Prostate gland (tissue), 2 donors: ENCODE measurements at regions of chr17 and their contacts with region 1.

Region 1: GRCh38 chr17:76868176-76868668 is at the start of gene MGAT5B:
- DNase-seq: peak; percentile 67
- H3K4me3 ChIP-seq: peak within 1 kb of the TSS; percentile 18 to 28
- H3K27ac ChIP-seq: no peak within 1 kb of the TSS
- H3K4me1 ChIP-seq: no peaks in the 10 kb centered on the region
- H3K27me3 ChIP-seq: peaks cover 20% of the 10 kb centered on the region
- CTCF ChIP-seq: peak; percentile 72 to 96 (median 81)
- POLR2A ChIP-seq: no peak
- total RNA-seq, gene MGAT5B: 0.14 to 4.1 TPM

Region 2: DNA sequence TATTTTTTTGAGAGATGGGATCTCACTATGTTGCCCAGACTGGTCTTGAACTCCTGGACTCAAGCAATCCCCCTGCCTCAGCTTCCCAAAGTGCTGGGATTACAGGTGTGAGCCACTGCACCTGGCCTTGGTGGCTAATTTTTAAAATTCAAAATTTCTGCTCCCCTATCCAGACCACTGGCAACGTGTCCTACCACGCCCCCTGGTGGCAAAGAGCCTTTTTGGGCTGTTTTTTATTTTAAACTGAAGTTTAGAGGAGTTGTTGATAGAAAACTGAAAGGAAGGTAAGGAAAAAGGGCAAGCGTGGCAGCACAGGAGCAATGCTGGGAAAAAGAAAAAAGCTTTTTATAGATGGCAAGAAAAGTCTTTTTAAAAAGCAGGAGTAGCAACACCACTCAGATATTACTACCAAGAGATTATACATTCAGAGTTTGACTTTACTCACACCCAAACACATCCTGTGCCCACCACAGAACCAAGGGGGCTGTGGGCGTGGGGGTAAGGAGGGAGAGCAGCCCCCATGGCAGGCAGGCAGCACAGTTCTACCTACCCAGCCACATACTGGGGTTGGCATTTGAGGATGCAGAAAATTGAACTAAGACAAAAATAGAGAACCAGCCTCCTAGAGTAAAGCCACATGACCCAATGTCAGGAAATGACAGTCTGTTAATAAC is 153.3 kb before region 1 on chr17:
- intact Hi-C with region 1: no loop called
- DNase-seq: peak; percentile 44
- H3K4me3 ChIP-seq: no peak overlapping the region
- H3K27ac ChIP-seq: no peak overlapping the region
- H3K4me1 ChIP-seq: peaks cover 5% of the 10 kb centered on the region
- H3K27me3 ChIP-seq: no peaks in the 10 kb centered on the region
- CTCF ChIP-seq: peak; percentile 73 to 84 (median 76)
- POLR2A ChIP-seq: no peak

Region 3: GRCh38 chr17:76793775-76794174 is 74.4 kb before region 1 on chr17:
- intact Hi-C with region 1: no loop called
- DNase-seq: no peak
- H3K4me3 ChIP-seq: no peak overlapping the region
- H3K27ac ChIP-seq: no peak overlapping the region
- H3K4me1 ChIP-seq: no peaks in the 10 kb centered on the region
- H3K27me3 ChIP-seq: no peaks in the 10 kb centered on the region
- CTCF ChIP-seq: peak in 1 of 4 experiments; percentile 8
- POLR2A ChIP-seq: no peak

Region 4: GRCh38 chr17:77054936-77055335 is 186.7 kb after region 1 on chr17:
- intact Hi-C with region 1: loop called (anchors 5 kb)
- DNase-seq: no peak
- H3K4me3 ChIP-seq: no peak overlapping the region
- H3K27ac ChIP-seq: no peak overlapping the region
- H3K4me1 ChIP-seq: no peaks in the 10 kb centered on the region
- H3K27me3 ChIP-seq: no peaks in the 10 kb centered on the region
- CTCF ChIP-seq: no peak
- POLR2A ChIP-seq: no peak

Region 5: GRCh38 chr17:77214743-77215142 is 346.5 kb after region 1 on chr17:
- intact Hi-C with region 1: no loop called
- DNase-seq: no peak
- H3K4me3 ChIP-seq: no peak overlapping the region
- H3K27ac ChIP-seq: no peak overlapping the region
- H3K4me1 ChIP-seq: peaks cover 3% of the 10 kb centered on the region
- H3K27me3 ChIP-seq: no peaks in the 10 kb centered on the region
- CTCF ChIP-seq: peak in 3 of 4 experiments; percentile 27 to 51 (median 33)
- POLR2A ChIP-seq: no peak

Region 6: DNA sequence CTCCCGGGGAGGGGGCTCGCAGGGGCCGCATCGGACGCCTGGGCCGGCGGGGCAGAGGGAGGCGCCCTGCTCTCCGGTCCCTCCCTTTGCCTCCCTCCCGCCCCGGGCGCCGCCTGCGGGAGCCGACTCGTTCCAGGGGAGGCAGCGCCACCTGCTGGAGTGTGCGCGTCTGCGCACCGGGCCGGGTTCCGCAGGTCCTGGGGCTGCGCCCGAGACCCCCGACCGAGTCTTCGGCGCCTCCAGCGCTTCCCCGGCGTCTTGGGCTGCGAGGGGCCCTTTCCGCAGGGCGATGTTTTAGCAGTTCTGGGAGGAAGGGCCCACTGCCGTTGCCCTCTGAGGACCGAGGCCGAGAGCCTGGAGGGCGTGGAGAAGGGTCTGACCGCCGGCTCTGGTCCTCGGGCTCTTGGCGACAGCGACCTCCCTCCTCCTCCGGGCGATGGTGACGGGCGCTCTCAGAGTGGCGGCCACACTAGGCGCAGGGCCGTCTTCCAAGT is 378.9 kb after region 1 on chr17:
- intact Hi-C with region 1: loop called (anchors 5 kb)
- DNase-seq: peak; percentile 72
- H3K4me3 ChIP-seq: peak overlapping the region; percentile 50 to 51
- H3K27ac ChIP-seq: peak overlapping the region; percentile 16 to 51
- H3K4me1 ChIP-seq: peaks cover 3% of the 10 kb centered on the region
- H3K27me3 ChIP-seq: no peaks in the 10 kb centered on the region
- CTCF ChIP-seq: peak; percentile 96 to 99 (median 98)
- POLR2A ChIP-seq: no peak